Gastrocnemius medialis (tissue), 4 donors: ENCODE measurements at regions of chr6 and their contacts with region 1.

Region 1: GRCh38 chr6:117317261-117317660 is 51.9 kb downstream of the VGLL2 start:
- DNase-seq: no peak
- ATAC-seq: peak; percentile 73 to 79
- H3K4me3 ChIP-seq: no peak overlapping the region
- H3K27ac ChIP-seq: no peak overlapping the region
- H3K4me1 ChIP-seq: peaks cover 0 to 6% of the 10 kb centered on the region in 2 donors
- H3K27me3 ChIP-seq: no peaks in the 10 kb centered on the region
- CTCF ChIP-seq: peak; percentile 54 to 70 (median 63)
- POLR2A ChIP-seq: no peak

Region 2: GRCh38 chr6:117280922-117281321 is 36.3 kb before region 1 on chr6:
- in situ Hi-C with region 1: no loop called
- intact Hi-C with region 1: loop called (anchors 1 kb)
- DNase-seq: no peak
- ATAC-seq: peak in 1 of 2 donors; percentile 61
- H3K4me3 ChIP-seq: no peak overlapping the region
- H3K27ac ChIP-seq: peak overlapping the region in 3 of 4 donors; percentile 40 to 99 (median 98)
- H3K4me1 ChIP-seq: peaks cover 11 to 18% of the 10 kb centered on the region in 2 donors
- H3K27me3 ChIP-seq: no peaks in the 10 kb centered on the region
- CTCF ChIP-seq: peak; percentile 5 to 67 (median 46)
- POLR2A ChIP-seq: no peak

Region 3: GRCh38 chr6:118168421-118168820 is 851.2 kb after region 1 on chr6:
- in situ Hi-C with region 1: no loop called
- intact Hi-C with region 1: no loop called
- DNase-seq: no peak
- ATAC-seq: no peak
- H3K4me3 ChIP-seq: no peak overlapping the region
- H3K27ac ChIP-seq: no peak overlapping the region
- H3K4me1 ChIP-seq: no peaks in the 10 kb centered on the region
- H3K27me3 ChIP-seq: no peaks in the 10 kb centered on the region
- CTCF ChIP-seq: no peak
- POLR2A ChIP-seq: no peak